K562 (cell line): ENCODE measurements at regions of chr14 and their contacts with region 1.

Region 1: GRCh38 chr14:73058224-73058921 is at the start of gene RBM25:
- DNase-seq: peak; percentile 83 to 96 (median 87)
- ATAC-seq: peak; percentile 94
- H3K4me3 ChIP-seq: peak within 1 kb of the TSS; percentile 96
- H3K27ac ChIP-seq: peak within 1 kb of the TSS; percentile 98
- H3K4me1 ChIP-seq: peaks cover 4 to 10% of the 10 kb centered on the region in 2 experiments; a peak in 3 of 5 replicates
- H3K27me3 ChIP-seq: no peaks in the 10 kb centered on the region
- CTCF ChIP-seq: peak in 1 of 3 experiments; percentile 24; a peak in 2 of 6 replicates
- EP300 ChIP-seq: peak; percentile 46
- POLR2A ChIP-seq: peak; percentile 99
- RAD21 ChIP-seq: peak in 1 of 2 experiments; percentile 19; a peak in 1 of 4 replicates
- polyA plus RNA-seq, gene RBM25: 28.6 to 36.7 TPM

Region 2: DNA sequence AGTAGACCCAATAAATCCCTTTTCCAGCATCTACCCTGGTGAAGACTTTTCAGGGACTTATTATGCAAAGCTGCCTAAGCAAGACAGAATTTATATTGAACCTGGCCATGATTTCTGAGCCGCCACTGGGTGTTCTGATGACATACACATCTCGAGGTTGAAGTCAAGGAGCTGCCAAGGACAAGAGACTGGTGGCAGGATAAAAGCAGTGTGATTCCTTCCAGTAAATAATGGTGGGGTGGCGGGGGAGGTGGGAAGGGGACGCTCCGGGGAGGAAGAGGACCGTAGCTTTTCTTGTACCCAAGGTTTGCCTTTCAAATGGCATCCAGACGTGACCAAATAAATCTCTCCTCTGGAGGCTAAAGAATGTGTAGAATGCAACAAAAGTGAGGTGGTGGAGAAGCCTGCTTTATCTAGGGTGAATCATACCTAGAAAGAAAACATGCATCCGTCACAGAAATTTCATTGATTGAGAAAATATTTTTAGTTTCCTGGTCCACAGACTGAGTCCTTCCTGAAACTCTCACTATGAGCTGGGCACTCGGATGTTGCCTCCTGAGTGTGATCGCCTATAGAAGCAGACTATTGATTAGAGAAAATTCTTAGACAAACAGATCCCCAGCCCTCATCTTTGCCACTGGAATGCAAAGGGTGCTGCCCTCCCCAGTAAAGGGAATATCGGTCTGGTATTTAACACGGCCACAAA is 276.7 kb before region 1 on chr14:
- CTCF ChIA-PET with region 1: no interaction called
- POLR2A ChIA-PET with region 1: no interaction called
- in situ Hi-C with region 1: no loop called
- intact Hi-C with region 1: no loop called
- DNase-seq: no peak
- ATAC-seq: no peak
- H3K4me3 ChIP-seq: no peak overlapping the region
- H3K27ac ChIP-seq: no peak overlapping the region
- H3K4me1 ChIP-seq: peaks cover 0 to 5% of the 10 kb centered on the region in 2 experiments; a peak in 2 of 5 replicates
- H3K27me3 ChIP-seq: no peaks in the 10 kb centered on the region; a peak in 1 of 5 replicates
- CTCF ChIP-seq: no peak
- EP300 ChIP-seq: no peak
- POLR2A ChIP-seq: no peak
- RAD21 ChIP-seq: no peak

Region 3: GRCh38 chr14:73026845-73027542 is 31.4 kb before region 1 on chr14 and contains the start of gene ZFYVE1:
- CTCF ChIA-PET with region 1: no interaction called
- POLR2A ChIA-PET with region 1: interaction called, 15 read pairs
- in situ Hi-C with region 1: no loop called
- intact Hi-C with region 1: no loop called
- DNase-seq: peak; percentile 85 to 96 (median 88)
- ATAC-seq: peak; percentile 99
- H3K4me3 ChIP-seq: peak within 1 kb of the TSS; percentile 68
- H3K27ac ChIP-seq: peak within 1 kb of the TSS; percentile 69
- H3K4me1 ChIP-seq: peaks cover 0 to 5% of the 10 kb centered on the region in 2 experiments; a peak in 3 of 5 replicates
- H3K27me3 ChIP-seq: no peaks in the 10 kb centered on the region
- CTCF ChIP-seq: no peak
- EP300 ChIP-seq: peak; percentile 31; the same call in 1 of the 2 replicates
- POLR2A ChIP-seq: peak; percentile 67
- RAD21 ChIP-seq: no peak
- polyA plus RNA-seq, gene ZFYVE1: 0.62 to 1.1 TPM

Region 4: GRCh38 chr14:73069585-73069984 is 11.2 kb after region 1 on chr14:
- CTCF ChIA-PET with region 1: no interaction called
- POLR2A ChIA-PET with region 1: interaction called, 16 read pairs
- in situ Hi-C with region 1: no loop called
- intact Hi-C with region 1: no loop called
- DNase-seq: no peak
- ATAC-seq: no peak
- H3K4me3 ChIP-seq: no peak overlapping the region
- H3K27ac ChIP-seq: no peak overlapping the region
- H3K4me1 ChIP-seq: no peaks in the 10 kb centered on the region; a peak in 1 of 5 replicates
- H3K27me3 ChIP-seq: no peaks in the 10 kb centered on the region
- CTCF ChIP-seq: no peak
- EP300 ChIP-seq: no peak
- POLR2A ChIP-seq: no peak
- RAD21 ChIP-seq: no peak